Caco-2 (cell line): ENCODE measurements at regions of chr16 and their contacts with region 1.

Region 1: GRCh38 chr16:73036074-73036826 is 11.7 kb downstream of the ZFHX3 start:
- DNase-seq: peak; percentile 81 to 90
- H3K4me3 ChIP-seq: peak overlapping the region; percentile 19
- H3K4me3 Mint-ChIP-seq: peak overlapping the region; percentile 75
- H3K27ac Mint-ChIP-seq: peak overlapping the region; percentile 95
- H3K4me1 ChIP-seq: peaks cover 82% of the 10 kb centered on the region
- H3K4me1 Mint-ChIP-seq: peaks cover 84% of the 10 kb centered on the region
- H3K27me3 ChIP-seq: no peaks in the 10 kb centered on the region
- H3K27me3 Mint-ChIP-seq: no peaks in the 10 kb centered on the region
- CTCF ChIP-seq: peak; percentile 21 to 43

Region 2: GRCh38 chr16:72938795-72939164 is 97.5 kb before region 1 on chr16:
- CTCF ChIA-PET with region 1: interaction called, 3 read pairs
- POLR2A ChIA-PET with region 1: no interaction called
- intact Hi-C with region 1: loop called (anchors 5 kb)
- DNase-seq: no peak
- H3K4me3 ChIP-seq: no peak overlapping the region
- H3K4me3 Mint-ChIP-seq: no peak overlapping the region
- H3K27ac Mint-ChIP-seq: peak overlapping the region; percentile 76
- H3K4me1 ChIP-seq: peaks cover 66% of the 10 kb centered on the region
- H3K4me1 Mint-ChIP-seq: peaks cover 58% of the 10 kb centered on the region
- H3K27me3 ChIP-seq: no peaks in the 10 kb centered on the region
- H3K27me3 Mint-ChIP-seq: no peaks in the 10 kb centered on the region
- CTCF ChIP-seq: no peak

Region 3: DNA sequence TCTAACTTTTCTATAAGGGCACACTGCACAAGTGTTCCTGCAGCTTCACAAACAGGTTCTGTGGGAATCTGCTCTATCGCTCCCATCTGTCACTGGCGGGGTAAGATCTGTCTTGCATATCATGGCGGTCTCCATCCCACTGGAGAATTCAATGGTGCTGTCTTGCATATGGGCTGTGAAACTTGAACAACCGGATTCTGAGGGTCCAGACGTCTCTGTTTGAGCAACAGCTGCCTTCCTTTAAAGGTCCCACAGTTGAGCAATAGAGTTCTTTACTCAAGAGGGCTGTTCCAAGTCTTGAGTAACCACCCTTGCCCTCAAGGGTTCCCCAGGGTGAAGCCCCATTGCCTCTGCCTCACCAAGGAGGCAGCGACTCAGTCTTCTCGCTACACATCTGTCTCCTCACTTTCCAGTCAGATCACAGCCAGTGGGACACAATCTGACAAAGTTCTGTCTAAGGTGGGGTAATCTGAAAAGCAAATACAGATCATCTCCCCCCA is 39.1 kb before region 1 on chr16:
- CTCF ChIA-PET with region 1: interaction called, 4 read pairs
- POLR2A ChIA-PET with region 1: interaction called, 7 read pairs
- intact Hi-C with region 1: loop called (anchors 1 kb)
- DNase-seq: peak; percentile 93 to 96
- H3K4me3 ChIP-seq: 0 out of 2 replicates have a peak overlapping the region, but pooled peaks have one; percentile 1
- H3K4me3 Mint-ChIP-seq: peak overlapping the region; percentile 59
- H3K27ac Mint-ChIP-seq: peak overlapping the region; percentile 86
- H3K4me1 ChIP-seq: peaks cover 91% of the 10 kb centered on the region
- H3K4me1 Mint-ChIP-seq: peaks cover 80% of the 10 kb centered on the region
- H3K27me3 ChIP-seq: no peaks in the 10 kb centered on the region
- H3K27me3 Mint-ChIP-seq: no peaks in the 10 kb centered on the region
- CTCF ChIP-seq: no peak

Region 4: DNA sequence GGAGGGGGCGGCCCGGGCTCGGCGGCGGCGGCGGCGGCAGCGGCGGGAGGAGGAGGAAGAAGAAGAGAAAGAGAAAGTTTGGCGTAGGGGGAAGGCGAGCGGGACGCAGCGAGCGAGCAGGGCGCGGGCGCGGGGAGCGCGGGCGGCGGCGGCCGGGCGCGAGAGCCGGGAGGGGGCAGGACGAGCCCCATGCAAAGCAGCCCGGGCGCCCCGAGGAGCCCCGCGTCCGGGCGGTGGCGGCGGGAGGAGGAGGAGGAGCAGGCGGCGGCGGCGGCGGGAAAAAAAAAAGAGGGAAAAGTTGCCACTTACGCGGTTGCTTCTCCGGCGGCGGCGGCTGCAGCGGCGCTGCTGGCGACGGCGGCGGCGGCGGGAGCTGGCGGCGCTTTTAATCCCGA is 22.0 kb after region 1 on chr16:
- CTCF ChIA-PET with region 1: no interaction called
- POLR2A ChIA-PET with region 1: interaction called, 9 read pairs
- intact Hi-C with region 1: loop called (anchors 1 kb)
- DNase-seq: peak; percentile 63 to 78
- H3K4me3 ChIP-seq: peak overlapping the region; percentile 58
- H3K4me3 Mint-ChIP-seq: peak overlapping the region; percentile 91
- H3K27ac Mint-ChIP-seq: no peak overlapping the region
- H3K4me1 ChIP-seq: peaks cover 42% of the 10 kb centered on the region
- H3K4me1 Mint-ChIP-seq: peaks cover 52% of the 10 kb centered on the region
- H3K27me3 ChIP-seq: no peaks in the 10 kb centered on the region
- H3K27me3 Mint-ChIP-seq: no peaks in the 10 kb centered on the region
- CTCF ChIP-seq: no peak

Region 5: GRCh38 chr16:73083271-73083670 is 47.0 kb after region 1 on chr16:
- CTCF ChIA-PET with region 1: no interaction called
- POLR2A ChIA-PET with region 1: no interaction called
- intact Hi-C with region 1: no loop called
- DNase-seq: no peak
- H3K4me3 ChIP-seq: no peak overlapping the region
- H3K4me3 Mint-ChIP-seq: no peak overlapping the region
- H3K27ac Mint-ChIP-seq: no peak overlapping the region
- H3K4me1 ChIP-seq: no peaks in the 10 kb centered on the region
- H3K4me1 Mint-ChIP-seq: no peaks in the 10 kb centered on the region
- H3K27me3 ChIP-seq: no peaks in the 10 kb centered on the region
- H3K27me3 Mint-ChIP-seq: no peaks in the 10 kb centered on the region
- CTCF ChIP-seq: no peak

Region 6: DNA sequence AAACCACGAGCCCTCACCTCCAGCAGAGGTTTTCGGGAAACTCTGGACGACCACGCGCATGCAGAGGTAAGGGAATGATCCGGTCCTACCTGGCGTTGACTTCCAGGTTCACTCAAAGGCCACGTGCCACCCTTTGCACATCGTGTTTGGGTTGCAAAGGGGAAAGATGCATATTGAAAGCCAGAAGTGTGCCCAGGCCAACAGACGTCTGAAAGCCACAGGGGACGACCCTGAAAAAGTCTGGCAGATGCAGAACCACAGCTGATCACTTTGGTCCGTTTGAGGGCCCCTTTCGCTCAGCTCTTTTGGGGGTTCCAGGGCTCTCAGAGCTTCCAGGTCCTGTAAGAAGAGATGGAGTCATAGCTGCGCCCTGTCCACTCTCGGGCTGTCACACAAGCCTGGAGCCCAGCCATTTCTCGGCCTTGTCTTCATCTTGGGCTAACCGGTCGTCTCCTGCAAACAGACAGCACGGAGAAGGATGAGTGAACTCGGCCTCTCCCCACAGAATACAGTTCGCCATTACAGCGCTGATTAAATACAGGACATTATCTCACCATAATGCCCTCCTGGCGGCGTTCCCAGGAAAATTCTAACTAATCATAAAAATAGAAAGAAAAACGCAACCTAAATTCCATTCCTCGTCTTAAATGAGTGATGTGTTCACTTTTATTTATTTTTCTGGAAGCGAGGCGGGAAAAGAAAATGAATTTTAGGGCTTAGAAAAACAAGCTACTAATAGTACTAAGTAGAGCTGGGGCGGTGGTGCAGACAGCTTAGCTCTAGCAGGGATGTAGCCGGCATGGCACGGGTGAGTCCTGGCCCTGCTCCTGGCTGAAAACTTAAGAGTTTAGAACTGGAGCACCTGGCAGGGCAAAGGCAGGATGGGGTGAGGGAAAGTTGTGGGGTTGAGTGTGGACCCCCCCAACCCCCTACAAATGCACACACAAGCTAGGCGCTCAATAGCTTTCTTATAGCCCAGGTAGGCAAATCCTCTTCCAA is 57.2 kb after region 1 on chr16:
- CTCF ChIA-PET with region 1: no interaction called
- POLR2A ChIA-PET with region 1: no interaction called
- intact Hi-C with region 1: no loop called
- DNase-seq: no peak
- H3K4me3 ChIP-seq: no peak overlapping the region
- H3K4me3 Mint-ChIP-seq: no peak overlapping the region
- H3K27ac Mint-ChIP-seq: no peak overlapping the region
- H3K4me1 ChIP-seq: no peaks in the 10 kb centered on the region
- H3K4me1 Mint-ChIP-seq: no peaks in the 10 kb centered on the region
- H3K27me3 ChIP-seq: no peaks in the 10 kb centered on the region
- H3K27me3 Mint-ChIP-seq: no peaks in the 10 kb centered on the region
- CTCF ChIP-seq: no peak

Region 7: DNA sequence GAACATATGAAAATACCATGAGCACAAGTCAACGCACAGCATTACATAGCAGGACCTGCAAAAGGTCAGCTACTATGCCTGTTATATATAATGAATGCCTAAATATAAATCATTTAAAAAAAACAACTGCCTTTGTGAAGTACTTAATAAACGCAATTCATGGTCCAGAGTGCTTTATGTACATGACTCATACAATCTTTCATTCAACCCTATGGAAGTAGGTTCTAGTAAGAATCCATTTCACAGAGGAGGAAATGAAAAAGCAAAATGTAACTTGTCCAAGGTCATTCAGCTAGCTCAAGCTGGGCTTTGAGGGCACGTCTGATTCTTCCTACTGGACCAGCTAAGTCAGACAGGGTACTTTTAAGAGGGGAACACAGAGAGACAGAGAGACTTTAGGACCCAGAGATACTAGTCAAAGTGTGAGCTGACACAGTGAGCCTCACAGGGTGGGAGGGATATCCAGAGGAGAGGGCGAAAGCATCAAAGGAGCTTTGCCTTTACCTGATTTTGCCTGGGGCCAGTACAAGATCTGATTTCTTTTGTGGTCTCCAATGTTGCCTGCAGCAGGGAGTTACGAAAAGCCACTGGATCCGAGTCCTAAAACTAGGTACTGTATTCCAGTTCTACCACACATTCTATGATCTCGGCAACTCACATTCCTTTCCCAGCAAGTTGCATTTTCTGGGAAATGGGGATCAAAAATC is 95.1 kb after region 1 on chr16:
- CTCF ChIA-PET with region 1: no interaction called
- POLR2A ChIA-PET with region 1: interaction called, 10 read pairs
- intact Hi-C with region 1: no loop called
- DNase-seq: no peak
- H3K4me3 ChIP-seq: no peak overlapping the region
- H3K4me3 Mint-ChIP-seq: no peak overlapping the region
- H3K27ac Mint-ChIP-seq: no peak overlapping the region
- H3K4me1 ChIP-seq: no peaks in the 10 kb centered on the region; the same call in 1 of the 2 replicates
- H3K4me1 Mint-ChIP-seq: no peaks in the 10 kb centered on the region
- H3K27me3 ChIP-seq: no peaks in the 10 kb centered on the region
- H3K27me3 Mint-ChIP-seq: peaks cover 2% of the 10 kb centered on the region
- CTCF ChIP-seq: no peak